ENCODE measurements at regions of chr2 and their contacts with region 1.

Region 1: DNA sequence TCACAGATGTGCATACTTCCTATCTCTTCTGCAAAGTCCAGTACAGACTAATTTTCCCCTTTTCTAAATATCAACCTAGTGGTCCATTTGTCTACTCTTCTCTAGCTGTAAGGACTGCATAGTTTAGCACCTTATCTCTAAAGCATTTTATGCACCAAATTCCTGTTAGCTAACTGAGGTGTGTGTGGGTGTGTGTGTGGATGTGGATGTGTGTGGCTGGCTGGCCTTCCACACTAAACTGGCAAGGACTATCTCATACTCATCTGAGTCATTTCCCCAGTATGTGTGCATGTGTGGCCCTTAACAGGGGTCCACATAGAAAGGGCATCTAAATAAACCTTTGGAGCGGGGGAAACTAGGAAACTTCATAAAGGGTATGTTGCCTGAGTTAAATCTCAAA is 139.6 kb downstream of the TTC32 start:
- DNase-seq: no peak
- H3K4me3 ChIP-seq: no peak overlapping the region
- H3K27ac ChIP-seq: no peak overlapping the region
- H3K4me1 ChIP-seq: peaks cover 0 to 25% (median 20%) of the 10 kb centered on the region in 4 donors
- H3K27me3 ChIP-seq: no peaks in the 10 kb centered on the region
- CTCF ChIP-seq: no peak
- EP300 ChIP-seq: no peak
- POLR2A ChIP-seq: no peak

Region 2: GRCh38 chr2:19786408-19787058 is 24.4 kb after region 1 on chr2:
- intact Hi-C with region 1: no loop called
- DNase-seq: no peak
- H3K4me3 ChIP-seq: no peak overlapping the region
- H3K27ac ChIP-seq: no peak overlapping the region
- H3K4me1 ChIP-seq: peaks cover 0 to 13% (median 3%) of the 10 kb centered on the region in 4 donors
- H3K27me3 ChIP-seq: no peaks in the 10 kb centered on the region
- CTCF ChIP-seq: no peak
- EP300 ChIP-seq: no peak
- POLR2A ChIP-seq: no peak

Region 3: GRCh38 chr2:19801367-19802080 is 39.4 kb after region 1 on chr2:
- intact Hi-C with region 1: loop called (anchors 2 kb)
- DNase-seq: peak; percentile 94
- H3K4me3 ChIP-seq: no peak overlapping the region
- H3K27ac ChIP-seq: peak overlapping the region in 3 of 4 donors; percentile 20 to 76 (median 61)
- H3K4me1 ChIP-seq: peaks cover 0 to 27% (median 24%) of the 10 kb centered on the region in 4 donors
- H3K27me3 ChIP-seq: no peaks in the 10 kb centered on the region
- CTCF ChIP-seq: no peak
- EP300 ChIP-seq: peak in 3 of 4 donors; percentile 5 to 90 (median 68)
- POLR2A ChIP-seq: no peak

Measured in sigmoid colon (tissue), 7 donors.